ENCODE measurements at regions of chr3 and their contacts with region 1.

Region 1: GRCh38 chr3:194682694-194683310 is 2.9 kb upstream of the FAM43A start:
- DNase-seq: peak; percentile 82
- CTCF ChIP-seq: peak; percentile 76

Region 2: GRCh38 chr3:194540274-194540905 is 142.4 kb before region 1 on chr3:
- CTCF ChIA-PET with region 1: no interaction called
- POLR2A ChIA-PET with region 1: no interaction called
- DNase-seq: no peak
- CTCF ChIP-seq: no peak

Region 3: GRCh38 chr3:195250473-195251251 is 567.9 kb after region 1 on chr3:
- CTCF ChIA-PET with region 1: interaction called, 20 read pairs
- POLR2A ChIA-PET with region 1: no interaction called
- DNase-seq: peak; percentile 60
- CTCF ChIP-seq: peak; percentile 39

Region 4: GRCh38 chr3:195259475-195260279 is 576.9 kb after region 1 on chr3:
- CTCF ChIA-PET with region 1: interaction called, 29 read pairs
- POLR2A ChIA-PET with region 1: interaction called, 4 read pairs
- DNase-seq: peak; percentile 95
- CTCF ChIP-seq: peak; percentile 97